HAP-1 (cell line): ENCODE measurements at regions of chr14 and their contacts with region 1.

Region 1: DNA sequence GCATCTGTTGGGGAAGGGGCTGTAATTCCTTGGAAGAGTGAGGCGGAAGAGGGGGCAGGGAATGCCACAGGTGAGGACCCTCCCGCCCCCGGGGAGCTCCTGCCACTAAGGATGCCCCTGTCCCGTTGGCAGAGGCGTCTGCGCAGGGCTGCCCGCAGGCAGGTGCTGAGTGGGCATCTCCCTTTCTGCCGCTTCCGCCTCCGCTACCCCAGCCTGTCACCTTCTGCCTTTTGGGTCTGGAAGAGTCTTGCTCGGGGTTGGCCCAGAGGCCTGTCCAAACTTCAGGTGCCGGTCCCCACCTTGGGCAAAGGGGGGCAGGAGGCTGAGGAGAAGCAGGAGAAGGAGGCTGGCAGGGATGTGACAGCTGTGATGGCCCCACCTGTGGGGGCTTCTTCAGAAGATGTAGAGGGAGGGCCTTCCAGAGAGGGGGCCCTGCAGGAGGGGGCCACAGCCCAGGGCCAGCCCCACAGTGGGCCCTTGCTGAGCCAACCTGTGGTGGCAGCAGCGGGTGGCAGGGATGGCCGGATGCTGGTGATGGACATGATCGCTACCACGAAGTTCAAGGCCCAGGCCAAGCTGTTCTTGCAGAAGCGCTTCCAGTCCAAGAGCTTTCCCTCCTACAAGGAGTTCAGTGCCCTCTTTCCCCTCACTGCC is 10.0 kb downstream of the VRTN start:
- DNase-seq: no peak
- H3K4me3 ChIP-seq: no peak overlapping the region
- H3K4me1 ChIP-seq: no peaks in the 10 kb centered on the region
- H3K27me3 ChIP-seq: no peaks in the 10 kb centered on the region

Region 2: DNA sequence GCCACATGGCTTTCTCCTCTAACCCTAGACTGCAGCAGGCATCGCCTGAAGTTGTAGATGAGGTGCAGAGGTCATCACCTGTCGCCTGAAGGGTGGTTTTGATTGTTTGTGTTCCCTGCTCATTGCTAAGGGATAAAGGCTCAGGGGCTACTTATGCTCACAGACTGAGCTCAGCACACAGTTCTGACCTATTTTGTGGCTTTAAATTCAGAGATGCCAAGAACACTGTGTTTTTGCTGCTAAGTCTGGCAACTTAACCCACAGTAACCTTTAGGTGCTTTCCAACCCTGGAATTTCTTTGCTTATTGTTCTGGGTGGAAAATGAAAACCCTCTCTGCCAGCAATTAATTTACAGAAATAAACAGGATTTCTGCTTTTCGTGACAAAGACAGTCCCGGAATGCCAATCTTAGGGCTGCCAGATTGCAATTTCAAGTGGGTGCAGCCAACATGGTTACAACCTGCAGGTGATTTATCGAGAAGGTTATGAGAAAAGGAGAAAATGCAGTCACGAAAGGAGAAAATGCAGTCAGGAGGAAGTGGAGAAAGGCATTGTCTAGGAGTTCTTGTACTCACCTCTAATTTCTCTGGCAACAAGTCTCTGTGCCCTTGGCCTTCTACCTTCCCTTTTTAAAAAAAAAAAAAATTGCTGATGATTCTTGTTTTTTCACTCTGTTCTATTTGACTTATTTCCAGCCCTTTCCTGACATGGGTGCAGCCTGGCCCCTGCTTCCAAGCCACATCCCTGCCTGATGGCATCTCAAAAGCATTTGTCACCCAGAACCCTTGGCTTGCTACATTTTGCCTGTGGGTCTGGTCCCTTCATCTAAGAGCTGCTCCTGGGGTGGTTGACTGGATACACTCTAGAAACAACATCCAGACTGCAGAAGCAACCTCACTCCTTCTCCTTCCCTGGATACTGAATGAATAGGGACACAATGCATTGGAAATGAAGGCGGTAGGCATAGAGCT is 111.5 kb after region 1 on chr14:
- in situ Hi-C with region 1: loop called (anchors 5 kb)
- DNase-seq: no peak
- H3K4me3 ChIP-seq: no peak overlapping the region
- H3K4me1 ChIP-seq: no peaks in the 10 kb centered on the region
- H3K27me3 ChIP-seq: 0 out of 2 replicates have a peak, but pooled peaks cover 5% of the 10 kb centered on the region